GM18951 (cell line): ENCODE measurements at regions of chr1 and their contacts with region 1.

Region 1: GRCh38 chr1:204806943-204807687 is 63.5 kb upstream of the NFASC start:
- POLR2A ChIP-seq: no peak

Region 2: GRCh38 chr1:204565617-204566582 is 241.2 kb before region 1 on chr1:
- in situ Hi-C with region 1: loop called (anchors 10 kb)
- POLR2A ChIP-seq: no peak

Region 3: DNA sequence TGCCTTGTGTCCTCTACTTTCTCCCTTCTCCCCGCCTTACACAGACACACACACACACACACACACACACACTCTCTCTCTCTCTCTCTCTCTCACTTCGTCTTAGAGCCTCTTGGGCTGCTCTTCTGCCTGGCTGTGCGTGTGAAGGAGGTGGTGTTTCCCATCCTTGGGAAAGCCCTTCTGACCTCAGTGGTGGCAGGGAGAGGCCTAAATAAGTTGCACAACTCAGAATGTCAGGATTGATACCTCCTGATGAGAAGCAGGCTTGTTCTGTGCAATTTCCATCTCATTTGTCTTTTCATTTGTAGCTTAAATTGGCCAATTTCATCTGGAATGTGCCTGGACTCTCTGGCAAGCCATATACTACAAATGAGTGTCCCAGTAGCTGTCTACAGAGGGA is 146.6 kb before region 1 on chr1:
- in situ Hi-C with region 1: no loop called
- POLR2A ChIP-seq: no peak